Breast epithelium (tissue), 4 donors: ENCODE measurements at regions of chr4 and their contacts with region 1.

Region 1: DNA sequence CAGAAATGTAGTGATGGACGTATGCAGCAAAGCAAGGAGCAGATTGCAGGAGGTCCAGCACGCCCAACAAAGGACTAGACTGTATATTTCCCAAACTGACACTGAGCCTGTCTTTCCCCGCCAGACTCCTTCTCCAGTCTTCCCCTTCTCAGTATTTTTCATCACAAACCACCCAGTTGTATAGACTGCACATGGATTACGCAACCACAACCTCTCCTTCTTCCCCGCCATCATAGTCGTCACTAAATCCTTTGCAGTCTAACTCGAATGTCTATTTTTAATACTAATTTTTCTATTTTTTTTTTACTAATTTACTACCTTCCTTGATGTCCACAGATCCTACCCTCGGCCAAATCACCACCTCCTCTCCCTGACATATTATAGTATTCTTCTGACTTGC is 105.4 kb downstream of the MTNR1A start:
- DNase-seq: no peak
- H3K4me3 ChIP-seq: no peak overlapping the region
- H3K27ac ChIP-seq: no peak overlapping the region
- H3K4me1 ChIP-seq: no peaks in the 10 kb centered on the region
- H3K27me3 ChIP-seq: no peaks in the 10 kb centered on the region
- CTCF ChIP-seq: no peak
- POLR2A ChIP-seq: no peak

Region 2: GRCh38 chr4:186500721-186501304 is 50.9 kb after region 1 on chr4:
- intact Hi-C with region 1: no loop called
- DNase-seq: no peak
- H3K4me3 ChIP-seq: no peak overlapping the region
- H3K27ac ChIP-seq: no peak overlapping the region
- H3K4me1 ChIP-seq: no peaks in the 10 kb centered on the region
- H3K27me3 ChIP-seq: no peaks in the 10 kb centered on the region
- CTCF ChIP-seq: no peak
- POLR2A ChIP-seq: no peak

Region 3: GRCh38 chr4:187491959-187492358 is 1042.0 kb after region 1 on chr4:
- intact Hi-C with region 1: loop called (anchors 10 kb)
- DNase-seq: no peak
- H3K4me3 ChIP-seq: no peak overlapping the region
- H3K27ac ChIP-seq: no peak overlapping the region
- H3K4me1 ChIP-seq: no peaks in the 10 kb centered on the region
- H3K27me3 ChIP-seq: no peaks in the 10 kb centered on the region
- CTCF ChIP-seq: no peak
- POLR2A ChIP-seq: no peak